Activated CD8-positive, alpha-beta T cell treated with anti-CD3 and anti-CD28 coated beads for 36 hours (primary cell): ENCODE measurements at regions of chr11 and their contacts with region 1.

Region 1: DNA sequence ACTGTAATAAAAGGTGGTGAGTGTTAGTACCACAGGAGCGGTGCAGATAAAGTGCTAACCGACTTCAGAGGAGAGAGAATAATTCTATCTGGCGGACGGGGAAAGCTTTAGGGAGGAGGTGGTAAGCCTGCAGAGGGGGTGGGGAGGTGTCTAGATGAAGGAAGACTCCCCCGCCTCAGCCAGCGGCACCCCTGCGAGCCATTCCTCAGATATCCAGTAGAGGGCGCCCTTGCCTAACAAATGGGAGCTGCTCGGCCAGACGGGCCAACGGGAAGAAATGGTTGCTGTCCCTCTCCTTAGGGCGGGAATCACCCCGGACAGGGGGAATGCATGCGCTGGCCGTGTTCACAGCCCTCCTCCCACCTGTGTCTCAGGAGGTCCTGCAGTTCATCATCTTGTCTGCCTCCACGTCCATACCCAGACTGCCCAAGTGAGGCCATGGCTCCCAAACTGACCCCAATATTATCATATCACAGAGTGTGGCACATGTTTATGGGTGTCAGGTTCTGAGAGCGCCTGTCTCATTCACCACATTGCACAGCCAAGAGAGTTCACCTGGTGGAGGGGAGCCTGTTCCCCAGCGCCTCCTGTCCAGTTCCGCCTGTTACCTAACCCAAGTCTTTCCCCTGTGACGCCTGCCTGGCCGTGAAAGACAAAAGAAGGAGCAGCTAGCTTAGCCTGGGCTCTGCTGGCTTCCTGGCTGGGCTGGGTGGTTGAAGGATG is 85.5 kb downstream of the ST3GAL4 start:
- DNase-seq: peak; percentile 80
- ATAC-seq: peak; percentile 94
- H3K4me3 Mint-ChIP-seq: no peak overlapping the region
- H3K27ac Mint-ChIP-seq: no peak overlapping the region
- H3K4me1 Mint-ChIP-seq: peaks cover 4% of the 10 kb centered on the region
- H3K27me3 Mint-ChIP-seq: peaks cover 8% of the 10 kb centered on the region
- CTCF ChIP-seq: peak; percentile 96

Region 2: DNA sequence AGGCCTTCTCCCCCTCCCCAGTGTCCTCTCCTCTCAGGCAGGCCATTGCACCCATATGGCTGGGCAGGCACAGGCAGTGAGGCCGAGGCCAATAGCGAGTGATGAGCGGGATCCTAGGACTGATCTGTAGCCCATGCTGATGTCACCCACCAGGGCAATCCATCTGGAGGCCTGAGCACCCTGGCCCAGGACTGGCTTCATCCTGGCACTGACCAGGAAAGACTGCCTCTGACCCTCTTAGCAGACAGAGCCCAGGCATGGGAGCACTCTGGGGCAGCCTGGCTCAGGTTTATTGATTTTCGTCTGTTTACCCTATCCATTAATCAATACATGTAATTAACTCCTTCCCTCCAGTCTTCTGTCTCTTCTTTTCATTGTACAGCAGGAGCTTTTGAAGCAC is 163.2 kb before region 1 on chr11:
- CTCF ChIA-PET with region 1: no interaction called
- POLR2A ChIA-PET with region 1: no interaction called
- intact Hi-C with region 1: no loop called
- DNase-seq: no peak
- ATAC-seq: no peak
- H3K4me3 Mint-ChIP-seq: no peak overlapping the region
- H3K27ac Mint-ChIP-seq: no peak overlapping the region
- H3K4me1 Mint-ChIP-seq: peaks cover 27% of the 10 kb centered on the region
- H3K27me3 Mint-ChIP-seq: no peaks in the 10 kb centered on the region
- CTCF ChIP-seq: no peak

Region 3: GRCh38 chr11:126375726-126376125 is 65.2 kb before region 1 on chr11:
- CTCF ChIA-PET with region 1: no interaction called
- POLR2A ChIA-PET with region 1: no interaction called
- intact Hi-C with region 1: no loop called
- DNase-seq: no peak
- ATAC-seq: no peak
- H3K4me3 Mint-ChIP-seq: no peak overlapping the region
- H3K27ac Mint-ChIP-seq: no peak overlapping the region
- H3K4me1 Mint-ChIP-seq: no peaks in the 10 kb centered on the region
- H3K27me3 Mint-ChIP-seq: no peaks in the 10 kb centered on the region
- CTCF ChIP-seq: no peak

Region 4: GRCh38 chr11:126452241-126453101 is 11.5 kb after region 1 on chr11:
- CTCF ChIA-PET with region 1: interaction called, 11 read pairs
- POLR2A ChIA-PET with region 1: no interaction called
- intact Hi-C with region 1: no loop called
- DNase-seq: no peak
- ATAC-seq: no peak
- H3K4me3 Mint-ChIP-seq: no peak overlapping the region
- H3K27ac Mint-ChIP-seq: no peak overlapping the region
- H3K4me1 Mint-ChIP-seq: no peaks in the 10 kb centered on the region
- H3K27me3 Mint-ChIP-seq: no peaks in the 10 kb centered on the region
- CTCF ChIP-seq: no peak

Region 5: GRCh38 chr11:126989942-126990715 is 549.2 kb after region 1 on chr11:
- CTCF ChIA-PET with region 1: interaction called, 3 read pairs
- POLR2A ChIA-PET with region 1: no interaction called
- intact Hi-C with region 1: loop called (anchors 10 kb)
- DNase-seq: peak; percentile 68
- ATAC-seq: peak; percentile 84
- H3K4me3 Mint-ChIP-seq: no peak overlapping the region
- H3K27ac Mint-ChIP-seq: no peak overlapping the region
- H3K4me1 Mint-ChIP-seq: no peaks in the 10 kb centered on the region
- H3K27me3 Mint-ChIP-seq: peaks cover 16% of the 10 kb centered on the region
- CTCF ChIP-seq: peak; percentile 84

Region 6: DNA sequence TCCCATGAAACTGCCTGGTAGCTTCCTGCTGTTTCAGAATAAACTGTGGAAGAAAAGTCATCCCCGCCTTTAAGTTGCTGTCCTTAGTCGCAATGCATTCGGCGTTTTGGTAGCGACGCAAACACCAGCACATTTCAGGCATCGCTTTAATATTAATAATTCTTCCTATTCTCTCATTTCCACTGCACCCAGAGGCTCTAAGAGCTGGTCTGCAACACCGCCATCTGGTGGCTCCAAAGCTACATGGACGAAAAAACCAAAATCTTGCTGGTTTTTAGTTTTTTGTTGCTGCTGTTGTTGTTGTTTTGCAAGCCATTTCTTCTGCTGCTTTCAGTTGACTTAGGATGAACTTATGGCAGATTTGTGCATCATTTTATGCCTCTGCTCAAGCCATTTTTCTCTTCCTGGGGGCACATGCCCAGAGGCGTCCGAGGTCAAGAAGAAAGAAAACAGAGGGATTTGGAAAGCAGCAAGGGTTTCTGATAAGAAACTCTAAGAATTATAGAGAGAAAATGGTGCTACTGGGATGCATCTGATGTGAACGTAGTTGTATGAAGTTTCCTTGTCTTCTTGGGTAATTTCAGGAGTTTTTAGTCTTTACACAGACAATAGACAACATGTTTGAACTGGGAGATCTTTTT is 905.0 kb after region 1 on chr11:
- CTCF ChIA-PET with region 1: interaction called, 10 read pairs
- POLR2A ChIA-PET with region 1: no interaction called
- intact Hi-C with region 1: no loop called
- DNase-seq: peak; percentile 23
- ATAC-seq: no peak
- H3K4me3 Mint-ChIP-seq: no peak overlapping the region
- H3K27ac Mint-ChIP-seq: no peak overlapping the region
- H3K4me1 Mint-ChIP-seq: no peaks in the 10 kb centered on the region
- H3K27me3 Mint-ChIP-seq: peaks cover 1% of the 10 kb centered on the region
- CTCF ChIP-seq: peak; percentile 53